ENCODE measurements at regions of chrX and their contacts with region 1.

Region 1: GRCh38 chrX:130176354-130176776 is 4.6 kb downstream of the RAB33A start:
- ATAC-seq: peak in 1 of 8 experiments; percentile 6
- H3K4me3 ChIP-seq: peak overlapping the region in 1 of 5 donors; percentile 17
- H3K27ac ChIP-seq: peak overlapping the region in 1 of 2 donors; percentile 39
- H3K4me1 ChIP-seq: peaks cover 16 to 23% of the 10 kb centered on the region in 2 donors

Region 2: GRCh38 chrX:129310000-129310399 is 866.4 kb before region 1 on chrX:
- in situ Hi-C with region 1: no loop called
- ATAC-seq: no peak
- H3K4me3 ChIP-seq: no peak overlapping the region
- H3K27ac ChIP-seq: no peak overlapping the region
- H3K4me1 ChIP-seq: no peaks in the 10 kb centered on the region

Region 3: GRCh38 chrX:130079824-130080406 is 96.5 kb before region 1 on chrX:
- in situ Hi-C with region 1: loop called in 1 of 9 experiments (anchors 25 kb)
- ATAC-seq: peak in 7 of 8 experiments; percentile 11 to 84 (median 55)
- H3K4me3 ChIP-seq: no peak overlapping the region
- H3K27ac ChIP-seq: no peak overlapping the region
- H3K4me1 ChIP-seq: peaks cover 0 to 10% of the 10 kb centered on the region in 2 donors

Region 4: GRCh38 chrX:130268500-130269170 is 92.3 kb after region 1 on chrX and contains the start of gene ZNF280C:
- in situ Hi-C with region 1: no loop called
- ATAC-seq: peak; percentile 95 to 98 (median 96)
- H3K4me3 ChIP-seq: peak within 1 kb of the TSS; percentile 48 to 96 (median 78)
- H3K27ac ChIP-seq: peak within 1 kb of the TSS; percentile 96
- H3K4me1 ChIP-seq: peaks cover 0 to 3% of the 10 kb centered on the region in 2 donors
- total RNA-seq, gene ZNF280C: 3.1 to 15.9 (median 10.5) TPM